HepG2 (cell line): ENCODE measurements at regions of chr15 and their contacts with region 1.

Region 1: GRCh38 chr15:60585743-60586708 is 107.1 kb upstream of the ICE2 start:
- DNase-seq: peak; percentile 68
- ATAC-seq: peak; percentile 51; the same call in 2 of the 3 replicates
- H3K4me3 ChIP-seq: no peak overlapping the region
- H3K27ac ChIP-seq: no peak overlapping the region
- H3K4me1 ChIP-seq: peaks cover 88% of the 10 kb centered on the region
- H3K27me3 ChIP-seq: no peaks in the 10 kb centered on the region
- CTCF ChIP-seq: peak; percentile 82
- EP300 ChIP-seq: no peak
- POLR2A ChIP-seq: no peak
- RAD21 ChIP-seq: peak; percentile 70

Region 2: DNA sequence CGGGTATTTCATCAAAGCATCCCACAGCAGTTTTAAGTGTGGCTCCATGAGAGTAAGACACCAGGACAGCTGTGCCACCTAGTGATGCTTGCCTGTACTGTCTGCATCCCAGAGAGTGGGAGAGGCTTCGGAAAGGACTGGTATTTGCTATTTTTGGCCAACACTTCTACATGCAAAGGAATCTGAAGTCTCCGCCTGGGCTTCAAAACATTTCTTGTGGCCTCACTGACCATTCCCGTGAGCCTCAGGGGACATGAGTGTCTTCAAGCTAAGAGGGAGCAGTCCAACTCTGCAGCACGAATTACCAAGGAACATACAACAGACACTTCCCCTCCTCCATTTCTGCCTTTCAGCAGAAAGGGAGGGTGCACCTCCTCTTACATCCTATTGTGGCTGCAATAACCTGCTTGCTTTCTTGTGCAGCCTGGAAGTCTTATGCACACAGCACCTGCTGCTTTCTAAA is 465.6 kb after region 1 on chr15:
- CTCF ChIA-PET with region 1: no interaction called
- POLR2A ChIA-PET with region 1: no interaction called
- in situ Hi-C with region 1: no loop called
- intact Hi-C with region 1: loop called (anchors 5 kb)
- DNase-seq: peak; percentile 24
- ATAC-seq: peak; percentile 92
- H3K4me3 ChIP-seq: no peak overlapping the region
- H3K27ac ChIP-seq: no peak overlapping the region
- H3K4me1 ChIP-seq: peaks cover 21% of the 10 kb centered on the region
- H3K27me3 ChIP-seq: peaks cover 0 to 5% of the 10 kb centered on the region in 2 experiments; a peak in 2 of 5 replicates
- CTCF ChIP-seq: peak; percentile 73
- EP300 ChIP-seq: no peak
- POLR2A ChIP-seq: no peak
- RAD21 ChIP-seq: no peak